A549 (cell line): ENCODE measurements at regions of chr5 and their contacts with region 1.

Region 1: DNA sequence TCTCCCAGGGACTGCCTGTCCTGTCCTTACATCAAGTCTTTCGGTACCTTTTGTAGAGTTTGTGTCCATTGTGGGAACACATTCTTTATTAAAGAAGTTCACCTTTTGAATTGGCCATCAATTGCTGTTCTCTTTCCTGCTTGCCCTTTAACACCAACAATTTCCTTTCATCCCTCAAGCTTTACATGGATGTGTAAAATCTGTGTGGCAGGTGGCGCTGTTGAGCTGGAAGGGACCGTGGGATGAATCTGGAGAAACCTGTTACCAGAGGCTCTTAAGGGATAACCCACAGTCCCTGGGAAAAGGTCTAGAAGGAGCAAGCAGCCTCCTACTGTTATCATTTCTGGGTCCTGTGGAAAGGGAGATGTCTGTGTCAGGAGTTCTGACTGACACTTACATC is 7.9 kb upstream of the ZFP62 start:
- DNase-seq: peak; percentile 87 to 89
- ATAC-seq: peak; percentile 91 to 94
- H3K4me3 ChIP-seq: no peak overlapping the region
- H3K27ac ChIP-seq: 0 out of 6 replicates have a peak overlapping the region, but pooled peaks of 1 of the 2 experiments have one; percentile 19
- H3K4me1 ChIP-seq: peaks cover 33% of the 10 kb centered on the region
- CTCF ChIP-seq: peak; percentile 86
- EP300 ChIP-seq: no peak
- POLR2A ChIP-seq: no peak
- RAD21 ChIP-seq: peak; percentile 84 to 90

Region 2: DNA sequence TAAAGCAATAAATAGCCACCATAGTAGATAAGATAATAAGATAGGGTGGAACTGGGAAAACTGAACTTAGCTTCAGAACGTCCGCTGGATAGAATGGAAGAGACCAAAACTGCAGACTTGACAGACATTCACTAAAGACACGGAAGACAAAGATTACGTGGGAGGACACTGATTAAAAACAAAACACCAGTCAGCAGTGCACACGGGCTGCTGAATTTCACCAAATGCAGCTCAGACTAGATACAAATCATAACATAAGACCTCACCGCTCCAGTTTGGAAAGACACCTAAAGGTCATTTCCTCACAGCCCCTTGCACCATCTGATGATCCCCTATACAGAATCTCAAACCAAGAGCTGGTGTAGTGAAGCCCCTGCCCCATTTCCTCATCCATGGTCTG is 126.2 kb before region 1 on chr5:
- CTCF ChIA-PET with region 1: no interaction called
- POLR2A ChIA-PET with region 1: no interaction called
- DNase-seq: no peak
- ATAC-seq: no peak
- H3K4me3 ChIP-seq: no peak overlapping the region
- H3K27ac ChIP-seq: no peak overlapping the region
- H3K4me1 ChIP-seq: no peaks in the 10 kb centered on the region
- CTCF ChIP-seq: no peak
- EP300 ChIP-seq: no peak
- POLR2A ChIP-seq: no peak
- RAD21 ChIP-seq: no peak

Region 3: DNA sequence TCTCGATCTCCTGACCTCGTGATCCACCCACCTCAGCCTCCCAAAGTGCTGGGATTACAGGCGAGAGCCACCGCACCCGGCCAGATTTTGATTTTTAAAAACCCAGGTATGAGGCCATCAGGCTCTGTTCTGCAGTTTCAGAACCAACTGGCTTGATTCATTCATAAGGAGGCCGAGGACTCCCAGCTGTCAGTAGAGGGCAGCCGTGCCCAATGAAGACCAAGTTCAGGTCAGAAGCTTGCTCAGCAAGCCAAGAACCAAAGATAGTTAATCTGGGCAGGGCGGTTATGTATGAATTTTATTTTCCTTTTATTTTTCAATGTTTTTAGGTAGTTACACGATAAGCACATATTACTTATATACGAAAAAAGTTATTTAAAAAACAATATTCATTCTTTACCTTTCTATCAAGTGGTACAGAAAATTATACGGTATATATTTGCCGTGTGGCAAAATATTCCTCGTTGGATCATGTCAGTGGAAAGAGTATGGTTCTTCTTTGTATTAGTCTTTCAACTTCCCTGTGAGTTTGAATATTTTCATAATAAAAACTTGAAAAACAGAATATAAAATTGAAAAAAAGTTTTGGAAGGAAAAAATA is 84.4 kb before region 1 on chr5:
- CTCF ChIA-PET with region 1: interaction called, 10 read pairs
- POLR2A ChIA-PET with region 1: no interaction called
- DNase-seq: peak; percentile 84 to 85
- ATAC-seq: peak; percentile 71 to 85; a peak in 5 of 6 replicates
- H3K4me3 ChIP-seq: no peak overlapping the region
- H3K27ac ChIP-seq: no peak overlapping the region
- H3K4me1 ChIP-seq: peaks cover 15% of the 10 kb centered on the region
- CTCF ChIP-seq: peak; percentile 77
- EP300 ChIP-seq: no peak
- POLR2A ChIP-seq: no peak
- RAD21 ChIP-seq: peak; percentile 88 to 92

Region 4: GRCh38 chr5:181084631-181085195 is 215.8 kb after region 1 on chr5:
- CTCF ChIA-PET with region 1: interaction called, 11 read pairs
- POLR2A ChIA-PET with region 1: no interaction called
- DNase-seq: no peak
- ATAC-seq: no peak
- H3K4me3 ChIP-seq: no peak overlapping the region
- H3K27ac ChIP-seq: no peak overlapping the region
- H3K4me1 ChIP-seq: no peaks in the 10 kb centered on the region
- CTCF ChIP-seq: no peak
- EP300 ChIP-seq: no peak
- POLR2A ChIP-seq: no peak
- RAD21 ChIP-seq: no peak

Region 5: GRCh38 chr5:181151146-181151545 is 282.2 kb after region 1 on chr5:
- CTCF ChIA-PET with region 1: interaction called, 24 read pairs
- POLR2A ChIA-PET with region 1: no interaction called
- DNase-seq: peak in 1 of 2 experiments; percentile 56
- ATAC-seq: peak; percentile 62 to 85; a peak in 4 of 6 replicates
- H3K4me3 ChIP-seq: no peak overlapping the region
- H3K27ac ChIP-seq: no peak overlapping the region
- H3K4me1 ChIP-seq: peaks cover 4% of the 10 kb centered on the region; the same call in 1 of the 3 replicates
- CTCF ChIP-seq: no peak; the same call in 2 of the 3 replicates
- EP300 ChIP-seq: no peak
- POLR2A ChIP-seq: no peak
- RAD21 ChIP-seq: peak; percentile 39 to 42; a peak in 3 of 5 replicates

Region 6: GRCh38 chr5:181173420-181174342 is 304.7 kb after region 1 on chr5:
- CTCF ChIA-PET with region 1: interaction called, 17 read pairs
- POLR2A ChIA-PET with region 1: no interaction called
- DNase-seq: peak; percentile 84 to 99
- ATAC-seq: peak; percentile 84 to 87
- H3K4me3 ChIP-seq: peak overlapping the region; percentile 50
- H3K27ac ChIP-seq: peak overlapping the region; percentile 76 to 87
- H3K4me1 ChIP-seq: peaks cover 21% of the 10 kb centered on the region
- CTCF ChIP-seq: peak; percentile 5; the same call in 1 of the 3 replicates
- EP300 ChIP-seq: no peak
- POLR2A ChIP-seq: no peak
- RAD21 ChIP-seq: 0 out of 5 replicates have a peak, but pooled peaks of 1 of the 2 experiments have one; percentile 1